Endothelial cell of umbilical vein (primary cell): ENCODE measurements at regions of chr2 and their contacts with region 1.

Region 1: DNA sequence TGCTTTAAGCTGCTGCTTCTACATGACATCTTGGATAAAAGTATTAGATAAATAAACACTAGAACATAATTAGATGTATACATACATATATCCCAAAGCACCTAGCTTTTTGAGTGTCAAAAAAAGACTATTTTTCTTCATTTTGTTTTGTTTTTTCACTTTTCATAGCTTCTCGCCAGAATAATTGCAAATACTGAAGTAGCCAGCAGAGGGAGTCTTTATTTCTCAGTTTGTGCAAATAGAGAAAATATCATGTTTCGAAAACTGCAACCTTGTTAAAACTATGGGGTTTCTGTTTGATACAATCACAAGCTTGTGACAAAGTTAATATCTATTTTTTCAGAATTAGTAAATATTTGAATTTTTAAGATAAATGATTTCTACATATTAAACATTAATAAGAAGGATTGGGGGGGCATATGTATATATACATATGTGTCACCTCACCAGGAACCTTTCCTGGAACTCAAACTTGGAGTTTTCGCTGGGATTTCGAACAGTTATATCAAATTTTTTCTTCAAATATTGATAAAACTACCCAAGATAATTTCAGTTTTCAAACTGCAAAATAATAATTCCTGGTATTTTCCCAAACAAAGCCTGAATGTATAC is 61.0 kb downstream of the GRB14 start:
- DNase-seq: peak; percentile 67
- H3K4me3 ChIP-seq: no peak overlapping the region
- H3K27ac ChIP-seq: no peak overlapping the region
- H3K4me1 ChIP-seq: peaks cover 22% of the 10 kb centered on the region
- H3K27me3 ChIP-seq: no peaks in the 10 kb centered on the region
- CTCF ChIP-seq: peak; percentile 45 to 47
- POLR2A ChIP-seq: no peak

Region 2: GRCh38 chr2:163171786-163172531 is 1388.3 kb before region 1 on chr2:
- CTCF ChIA-PET with region 1: interaction called, 12 read pairs
- POLR2A ChIA-PET with region 1: no interaction called
- dilution Hi-C with region 1: no loop called
- intact Hi-C with region 1: no loop called
- DNase-seq: no peak
- H3K4me3 ChIP-seq: no peak overlapping the region
- H3K27ac ChIP-seq: no peak overlapping the region
- H3K4me1 ChIP-seq: no peaks in the 10 kb centered on the region
- H3K27me3 ChIP-seq: no peaks in the 10 kb centered on the region
- CTCF ChIP-seq: no peak
- POLR2A ChIP-seq: no peak

Region 3: DNA sequence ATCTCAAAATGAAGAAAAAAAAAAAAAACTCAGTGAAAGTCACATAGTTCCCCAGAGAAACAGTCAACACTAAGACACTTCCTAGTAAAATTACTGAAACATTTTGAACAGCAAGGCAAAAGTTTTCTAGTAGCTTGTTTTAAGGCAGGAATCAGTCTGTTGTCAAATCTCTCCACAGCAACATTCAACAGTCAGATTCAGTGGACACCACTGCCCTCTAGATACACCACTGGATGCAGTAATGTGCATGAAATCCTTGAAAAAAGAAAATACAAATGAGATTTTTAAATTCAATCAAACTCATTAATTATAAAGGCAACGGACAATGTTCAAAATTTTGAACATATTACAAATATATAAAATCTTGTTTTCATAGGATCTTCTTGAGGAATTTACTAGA is 14.6 kb after region 1 on chr2:
- CTCF ChIA-PET with region 1: interaction called, 83 read pairs
- POLR2A ChIA-PET with region 1: no interaction called
- dilution Hi-C with region 1: no loop called
- intact Hi-C with region 1: loop called (anchors 1 kb)
- DNase-seq: peak; percentile 36
- H3K4me3 ChIP-seq: no peak overlapping the region
- H3K27ac ChIP-seq: no peak overlapping the region
- H3K4me1 ChIP-seq: no peaks in the 10 kb centered on the region
- H3K27me3 ChIP-seq: no peaks in the 10 kb centered on the region
- CTCF ChIP-seq: peak in 1 of 2 donors; percentile 4
- POLR2A ChIP-seq: no peak

Region 4: GRCh38 chr2:164589522-164589921 is 29.2 kb after region 1 on chr2:
- CTCF ChIA-PET with region 1: interaction called, 233 read pairs
- POLR2A ChIA-PET with region 1: no interaction called
- dilution Hi-C with region 1: no loop called
- intact Hi-C with region 1: no loop called
- DNase-seq: no peak
- H3K4me3 ChIP-seq: no peak overlapping the region
- H3K27ac ChIP-seq: no peak overlapping the region
- H3K4me1 ChIP-seq: no peaks in the 10 kb centered on the region
- H3K27me3 ChIP-seq: no peaks in the 10 kb centered on the region
- CTCF ChIP-seq: no peak
- POLR2A ChIP-seq: no peak

Region 5: GRCh38 chr2:164606557-164606956 is 46.3 kb after region 1 on chr2:
- CTCF ChIA-PET with region 1: interaction called, 20 read pairs
- POLR2A ChIA-PET with region 1: no interaction called
- dilution Hi-C with region 1: no loop called
- intact Hi-C with region 1: no loop called
- DNase-seq: peak; percentile 18
- H3K4me3 ChIP-seq: no peak overlapping the region
- H3K27ac ChIP-seq: no peak overlapping the region
- H3K4me1 ChIP-seq: no peaks in the 10 kb centered on the region
- H3K27me3 ChIP-seq: no peaks in the 10 kb centered on the region
- CTCF ChIP-seq: no peak
- POLR2A ChIP-seq: no peak

Region 6: DNA sequence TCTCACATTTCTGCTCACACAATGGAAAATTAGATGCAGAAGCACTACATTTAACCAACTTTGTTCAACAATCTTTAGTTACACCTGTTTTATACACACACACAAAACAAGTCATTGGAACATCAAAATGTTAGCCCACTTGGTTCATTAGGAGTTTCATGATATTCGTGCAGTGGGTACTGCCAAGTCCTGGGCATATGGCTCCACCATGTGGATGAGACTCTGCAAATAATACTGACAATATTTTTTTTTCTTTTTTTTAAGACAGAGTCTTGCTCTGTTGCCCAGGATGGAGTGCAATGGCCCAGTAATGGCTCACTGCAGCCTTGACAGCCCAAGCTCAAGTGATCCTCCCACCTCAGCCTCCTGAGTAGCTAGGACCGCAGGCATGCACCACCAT is 95.5 kb after region 1 on chr2:
- CTCF ChIA-PET with region 1: interaction called, 15 read pairs
- POLR2A ChIA-PET with region 1: no interaction called
- dilution Hi-C with region 1: no loop called
- intact Hi-C with region 1: loop called (anchors 1 kb)
- DNase-seq: peak; percentile 21
- H3K4me3 ChIP-seq: no peak overlapping the region
- H3K27ac ChIP-seq: no peak overlapping the region
- H3K4me1 ChIP-seq: peaks cover 5% of the 10 kb centered on the region
- H3K27me3 ChIP-seq: no peaks in the 10 kb centered on the region
- CTCF ChIP-seq: no peak
- POLR2A ChIP-seq: no peak

Region 7: DNA sequence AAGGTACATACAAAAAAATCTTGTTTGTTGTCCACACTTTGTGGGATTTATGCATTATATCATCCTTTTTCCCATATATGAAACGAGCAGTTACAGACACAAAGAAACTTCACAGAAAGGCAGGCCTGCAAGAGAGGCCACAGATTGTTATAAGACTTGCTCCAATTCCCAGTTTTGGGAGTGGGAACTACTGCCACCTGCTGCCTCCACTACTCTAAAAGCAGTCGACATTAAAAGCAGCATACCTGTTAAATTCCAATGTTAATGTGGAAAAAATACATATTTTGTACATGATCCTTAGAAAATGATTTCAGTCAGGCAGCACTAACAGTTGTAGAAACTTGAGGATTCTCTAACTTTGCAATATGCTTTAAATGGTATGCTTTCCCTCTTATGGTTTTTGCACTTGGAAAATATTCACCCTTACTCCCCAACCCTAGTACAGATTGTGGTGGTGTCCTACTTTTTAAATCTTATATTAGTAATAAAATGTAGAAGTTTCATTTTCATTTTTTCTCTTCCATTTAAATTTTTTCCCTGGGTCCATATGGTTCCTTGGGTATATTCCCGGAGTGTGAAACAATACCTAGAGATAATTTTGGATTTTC is 357.1 kb after region 1 on chr2:
- CTCF ChIA-PET with region 1: interaction called, 4 read pairs
- POLR2A ChIA-PET with region 1: no interaction called
- dilution Hi-C with region 1: no loop called
- intact Hi-C with region 1: loop called (anchors 2 kb)
- DNase-seq: peak; percentile 73
- H3K4me3 ChIP-seq: no peak overlapping the region
- H3K27ac ChIP-seq: no peak overlapping the region
- H3K4me1 ChIP-seq: peaks cover 18% of the 10 kb centered on the region
- H3K27me3 ChIP-seq: no peaks in the 10 kb centered on the region
- CTCF ChIP-seq: peak; percentile 21 to 46
- POLR2A ChIP-seq: no peak